Panc1 (cell line): ENCODE measurements at regions of chr17 and their contacts with region 1.

Region 1: DNA sequence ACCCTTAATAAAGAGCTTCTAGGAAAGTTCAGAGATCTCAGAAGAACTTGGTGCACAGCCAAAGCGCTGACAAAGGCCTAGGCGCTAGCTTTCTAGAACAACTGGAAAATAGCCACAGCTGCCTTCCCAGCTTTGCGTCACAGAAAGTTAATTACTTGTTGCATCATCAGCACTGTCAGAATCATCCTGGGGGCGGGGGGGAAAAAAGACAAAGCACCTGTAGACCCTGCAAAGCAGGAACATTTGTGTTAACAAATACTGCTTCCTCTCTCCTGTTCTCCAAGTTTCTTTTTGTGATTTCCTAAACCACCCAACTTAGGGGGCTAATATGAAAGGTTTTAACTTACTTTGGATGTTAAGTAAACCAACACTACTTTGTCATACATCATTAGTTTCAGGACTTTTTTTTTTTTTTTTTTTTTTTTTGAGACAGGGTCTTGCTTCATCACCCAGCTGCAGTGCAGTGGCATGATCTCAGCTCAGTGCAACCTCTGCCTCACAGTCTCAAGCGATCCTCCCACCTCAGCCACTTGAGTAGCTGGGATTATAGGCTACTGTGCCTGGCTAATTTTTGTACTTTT is 4.8 kb upstream of the AARSD1 start:
- DNase-seq: no peak
- ATAC-seq: no peak
- H3K4me3 ChIP-seq: no peak overlapping the region
- H3K27ac ChIP-seq: no peak overlapping the region
- H3K4me1 ChIP-seq: no peaks in the 10 kb centered on the region
- H3K27me3 ChIP-seq: no peaks in the 10 kb centered on the region
- CTCF ChIP-seq: no peak

Region 2: DNA sequence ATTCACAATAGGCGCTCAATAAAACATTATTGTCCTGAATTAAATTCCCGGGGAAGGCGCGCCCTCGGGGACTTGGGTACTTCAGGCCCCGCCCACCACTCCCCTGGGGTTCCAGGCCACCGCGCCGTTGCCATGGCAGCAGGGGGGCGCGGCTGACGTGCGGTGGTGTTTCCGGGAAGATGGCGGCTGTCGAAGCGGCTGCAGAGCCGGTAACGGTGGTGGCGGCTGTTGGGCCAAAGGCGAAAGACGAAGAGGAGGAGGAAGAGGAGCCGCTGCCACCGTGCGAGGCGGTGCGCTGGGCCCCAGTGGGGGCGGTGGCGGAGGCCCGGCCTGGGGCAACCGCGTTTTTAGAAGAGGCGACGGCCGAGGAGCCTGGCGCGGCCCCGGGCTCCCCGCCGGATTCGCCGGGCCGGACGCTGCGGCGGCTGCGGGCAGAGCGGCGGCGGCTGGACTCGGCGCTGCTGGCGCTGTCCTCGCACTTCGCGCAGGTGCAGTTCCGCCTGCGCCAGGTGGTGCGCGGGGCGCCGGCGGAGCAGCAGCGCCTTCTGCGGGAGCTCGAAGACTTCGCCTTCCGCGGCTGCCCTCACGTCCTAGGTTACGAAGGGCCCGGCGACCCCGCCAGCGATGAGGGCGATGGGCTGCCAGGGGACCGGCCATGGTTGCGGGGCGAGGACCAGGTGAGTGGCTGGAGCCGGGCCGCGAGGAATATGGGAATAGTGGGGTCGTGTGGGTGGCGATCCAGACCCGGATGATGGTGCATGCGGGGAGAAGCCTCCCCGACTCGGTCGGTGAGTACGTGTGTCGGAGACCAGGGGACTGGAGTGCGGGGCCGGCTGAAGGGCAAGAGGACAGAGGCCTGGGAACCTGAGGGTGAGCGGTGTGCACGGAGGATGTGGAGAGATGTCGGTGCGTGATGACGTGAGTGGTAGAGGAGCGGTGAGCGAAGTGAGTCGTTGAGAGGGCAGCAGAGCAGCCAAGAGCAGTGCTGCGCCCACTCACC is 11.6 kb after region 1 on chr17 and contains the start of gene RUNDC1:
- CTCF ChIA-PET with region 1: no interaction called
- POLR2A ChIA-PET with region 1: interaction called, 10 read pairs
- in situ Hi-C with region 1: no loop called
- intact Hi-C with region 1: no loop called
- DNase-seq: no peak
- ATAC-seq: peak; percentile 96
- H3K4me3 ChIP-seq: peak within 1 kb of the TSS; percentile 68 to 78
- H3K27ac ChIP-seq: peak within 1 kb of the TSS; percentile 76
- H3K4me1 ChIP-seq: peaks cover 14% of the 10 kb centered on the region; the same call in 1 of the 2 replicates
- H3K27me3 ChIP-seq: no peaks in the 10 kb centered on the region
- CTCF ChIP-seq: no peak
- total RNA-seq, gene RUNDC1: 11.2 TPM

Region 3: GRCh38 chr17:43006639-43007551 is 37.8 kb after region 1 on chr17 and contains the start of gene IFI35:
- CTCF ChIA-PET with region 1: no interaction called
- POLR2A ChIA-PET with region 1: no interaction called
- in situ Hi-C with region 1: no loop called
- intact Hi-C with region 1: no loop called
- DNase-seq: no peak
- ATAC-seq: peak; percentile 85
- H3K4me3 ChIP-seq: peak within 1 kb of the TSS; percentile 64 to 92
- H3K27ac ChIP-seq: peak within 1 kb of the TSS; percentile 92
- H3K4me1 ChIP-seq: peaks cover 5% of the 10 kb centered on the region; the same call in 1 of the 2 replicates
- H3K27me3 ChIP-seq: no peaks in the 10 kb centered on the region
- CTCF ChIP-seq: no peak
- total RNA-seq, gene IFI35: 42.6 TPM

Region 4: GRCh38 chr17:43085474-43085873 is 116.4 kb after region 1 on chr17:
- CTCF ChIA-PET with region 1: no interaction called
- POLR2A ChIA-PET with region 1: no interaction called
- in situ Hi-C with region 1: no loop called
- intact Hi-C with region 1: no loop called
- DNase-seq: no peak
- ATAC-seq: no peak
- H3K4me3 ChIP-seq: no peak overlapping the region
- H3K27ac ChIP-seq: no peak overlapping the region
- H3K4me1 ChIP-seq: no peaks in the 10 kb centered on the region
- H3K27me3 ChIP-seq: no peaks in the 10 kb centered on the region
- CTCF ChIP-seq: no peak